ENCODE measurements at regions of chr6 and their contacts with region 1.

Region 1: GRCh38 chr6:127100510-127101140 is 17.8 kb upstream of the RSPO3 start:
- DNase-seq: no peak
- ATAC-seq: peak; percentile 43

Region 2: GRCh38 chr6:126614642-126615452 is 485.8 kb before region 1 on chr6:
- intact Hi-C with region 1: no loop called
- DNase-seq: no peak
- ATAC-seq: no peak

Region 3: DNA sequence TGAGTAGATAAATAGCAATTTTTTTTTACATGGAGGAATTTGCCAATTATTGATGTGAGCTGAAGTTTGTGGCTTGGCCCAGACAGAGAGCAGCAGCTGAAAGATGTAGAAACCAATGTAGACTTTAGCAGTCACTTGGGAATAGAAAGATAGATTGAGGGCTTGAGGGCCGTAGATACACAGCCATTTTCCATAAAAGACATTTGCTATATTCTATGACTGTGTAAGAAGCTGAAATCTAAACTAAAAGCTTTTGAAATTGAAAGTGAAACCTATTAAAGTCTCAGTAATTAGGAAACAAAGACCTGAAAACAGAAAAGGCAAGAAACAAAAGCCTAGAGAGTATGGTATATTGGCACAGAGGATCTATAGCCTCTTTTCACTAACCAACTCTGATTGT is 428.0 kb before region 1 on chr6:
- intact Hi-C with region 1: no loop called
- DNase-seq: no peak
- ATAC-seq: no peak

Region 4: DNA sequence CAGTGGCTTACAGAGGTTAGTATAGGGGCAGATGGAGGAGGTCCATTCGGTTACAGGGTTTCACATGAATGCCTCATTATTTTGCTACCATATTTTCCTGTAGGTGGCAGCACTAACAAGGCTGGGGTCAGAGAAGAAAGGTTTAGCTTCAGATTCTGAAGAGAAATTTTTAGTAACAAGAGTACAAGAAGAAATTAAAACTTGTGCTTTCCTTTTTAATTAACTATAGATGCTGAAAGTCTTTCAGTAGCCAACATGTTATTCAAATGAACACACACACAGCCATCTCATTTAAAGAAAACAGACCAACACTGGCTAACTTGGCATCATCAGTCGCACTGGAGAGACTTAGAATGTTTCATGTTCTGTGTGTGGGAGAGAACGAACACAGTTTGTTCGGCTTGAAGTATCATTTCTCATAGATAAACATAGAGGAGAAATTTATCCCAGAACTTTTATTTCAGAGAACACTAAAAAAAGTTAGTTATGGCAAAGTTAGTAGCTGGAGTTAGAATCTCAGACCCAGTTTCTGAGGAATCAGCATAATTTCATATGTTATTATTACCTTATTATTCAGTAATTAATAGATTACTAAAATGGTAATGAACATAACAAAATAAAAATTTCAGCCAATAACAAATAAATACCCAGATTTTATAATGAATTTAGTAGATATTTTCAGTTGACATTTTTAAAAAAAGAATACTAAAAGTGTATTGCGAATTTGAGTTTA is 296.1 kb before region 1 on chr6:
- intact Hi-C with region 1: loop called (anchors 10 kb)
- DNase-seq: no peak
- ATAC-seq: peak; percentile 74

Region 5: DNA sequence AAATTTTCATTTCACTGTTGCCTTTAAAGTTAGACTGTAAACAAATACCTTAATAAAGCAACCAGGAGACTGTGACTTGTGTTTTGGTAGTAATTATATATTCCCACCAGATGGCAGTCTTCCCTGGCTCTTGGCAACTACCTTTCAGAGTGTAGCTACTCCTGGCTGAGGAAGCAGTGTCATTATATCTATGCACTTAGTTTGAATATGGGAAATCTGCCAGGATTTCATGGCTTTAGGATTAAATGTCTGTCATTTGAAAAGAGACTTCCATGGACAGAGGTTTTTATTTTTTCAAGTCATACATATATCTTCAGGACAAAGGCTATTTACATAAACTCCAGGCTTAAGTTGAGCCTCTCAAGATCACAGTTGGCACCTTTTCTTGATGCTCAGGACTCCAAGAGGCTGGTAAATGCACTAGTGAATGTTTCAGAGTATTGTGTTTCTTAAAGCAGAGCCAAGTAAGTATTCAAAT is 636.4 kb after region 1 on chr6:
- intact Hi-C with region 1: no loop called
- DNase-seq: no peak
- ATAC-seq: peak; percentile 91